Activated naive CD4-positive, alpha-beta T cell treated with anti-CD3 and anti-CD28 coated beads for 36 hours (primary cell): ENCODE measurements at regions of chr14 and their contacts with region 1.

Region 1: DNA sequence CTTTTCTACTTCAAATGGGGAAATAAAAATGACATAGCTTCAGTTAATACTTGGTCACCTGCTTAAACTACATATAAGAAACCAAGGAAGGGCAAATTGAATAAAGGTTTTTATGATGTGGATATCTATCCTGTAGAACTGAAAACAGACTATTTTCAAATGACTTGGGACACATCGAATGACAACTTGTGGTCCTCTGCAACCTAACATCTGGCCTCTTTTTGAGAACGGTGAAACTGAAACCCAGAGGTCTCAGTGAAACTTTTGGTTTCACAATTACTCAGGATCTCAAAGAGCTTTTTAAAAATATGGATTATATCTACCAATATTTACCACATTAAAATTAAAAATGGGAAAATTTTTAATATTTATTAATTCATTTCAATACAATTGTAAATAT is 65.2 kb downstream of the PPP2R5E start:
- DNase-seq: peak; percentile 42
- H3K4me3 Mint-ChIP-seq: no peak overlapping the region
- H3K27ac Mint-ChIP-seq: no peak overlapping the region
- H3K4me1 Mint-ChIP-seq: peaks cover 49% of the 10 kb centered on the region
- H3K27me3 Mint-ChIP-seq: no peaks in the 10 kb centered on the region

Region 2: DNA sequence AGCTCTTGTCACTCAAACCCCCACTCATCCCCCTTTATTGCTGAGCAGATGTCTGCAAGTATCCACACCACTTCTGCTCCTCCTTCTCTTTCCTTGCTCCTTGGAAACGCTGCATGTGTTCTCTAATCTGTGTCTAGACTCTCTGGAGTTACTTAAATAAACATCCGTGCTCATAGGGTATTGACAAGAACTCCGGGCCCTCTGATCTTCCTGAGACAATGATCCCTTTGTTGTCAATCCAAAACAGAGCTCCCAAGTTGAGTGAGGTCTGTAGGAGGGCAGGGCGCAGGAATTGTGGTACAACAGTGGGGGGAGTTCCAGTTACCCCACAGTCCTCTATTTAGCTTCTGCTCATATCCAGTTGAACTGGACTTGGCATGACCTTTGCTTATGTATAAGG is 1226.8 kb before region 1 on chr14:
- CTCF ChIA-PET with region 1: no interaction called
- intact Hi-C with region 1: no loop called
- DNase-seq: no peak
- H3K4me3 Mint-ChIP-seq: no peak overlapping the region
- H3K27ac Mint-ChIP-seq: no peak overlapping the region
- H3K4me1 Mint-ChIP-seq: no peaks in the 10 kb centered on the region
- H3K27me3 Mint-ChIP-seq: peaks cover 2% of the 10 kb centered on the region

Region 3: DNA sequence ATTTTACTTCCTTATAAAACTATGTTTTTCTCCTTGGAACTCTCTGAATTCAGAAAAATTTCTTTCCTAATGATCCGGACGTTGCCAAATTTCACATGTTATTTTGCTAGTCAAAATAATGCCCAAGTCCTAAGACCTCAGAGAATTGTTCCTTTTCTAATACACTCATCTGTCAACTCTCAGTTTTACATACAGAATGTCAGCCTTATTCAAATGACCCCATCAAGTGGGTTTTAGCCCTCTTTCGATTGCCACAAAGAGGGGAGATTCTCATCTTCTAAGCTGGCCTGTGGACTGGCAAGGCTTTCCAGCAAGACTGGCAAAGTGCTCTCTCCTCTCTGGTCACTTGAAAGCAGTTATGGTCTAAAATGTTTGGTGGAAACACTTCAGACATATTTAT is 60.0 kb before region 1 on chr14:
- CTCF ChIA-PET with region 1: no interaction called
- intact Hi-C with region 1: no loop called
- DNase-seq: no peak
- H3K4me3 Mint-ChIP-seq: no peak overlapping the region
- H3K27ac Mint-ChIP-seq: no peak overlapping the region
- H3K4me1 Mint-ChIP-seq: no peaks in the 10 kb centered on the region
- H3K27me3 Mint-ChIP-seq: no peaks in the 10 kb centered on the region

Region 4: DNA sequence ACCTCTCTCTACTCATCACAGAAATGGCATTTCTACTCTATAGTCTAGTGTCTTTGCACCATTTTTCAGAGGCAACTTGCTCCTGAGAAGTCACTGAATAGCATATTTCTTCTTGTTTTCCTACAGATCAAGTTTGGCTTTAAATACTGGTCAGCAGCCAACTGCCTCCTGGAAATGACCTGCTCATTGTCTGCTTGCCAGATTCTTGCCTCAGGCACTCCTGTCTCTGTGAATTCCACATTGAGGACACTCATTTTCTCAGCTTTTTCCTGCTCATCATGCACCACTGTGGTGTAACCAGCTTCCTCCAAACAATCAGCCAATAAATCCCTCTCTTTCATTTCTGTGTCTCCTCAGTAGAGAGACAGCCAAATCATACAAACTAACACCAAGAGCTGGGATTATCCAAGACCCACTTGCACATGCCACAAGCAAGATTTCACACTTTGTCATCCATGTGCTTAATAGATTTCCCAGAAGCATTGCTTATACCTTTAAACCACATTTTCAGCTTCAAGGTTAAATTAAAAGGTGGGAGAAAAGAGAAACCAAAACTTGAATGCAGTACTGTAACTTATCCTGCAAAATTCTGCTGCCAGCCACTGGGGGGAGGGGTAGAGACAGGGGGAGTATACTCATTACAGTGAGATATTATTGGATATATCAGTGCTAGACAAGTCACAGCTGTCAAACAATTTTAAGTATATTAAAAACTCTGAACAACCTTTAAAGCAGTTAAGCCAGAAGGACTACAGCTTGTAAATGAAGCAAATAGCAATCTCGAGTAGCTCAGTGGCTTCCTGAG is 39.9 kb before region 1 on chr14:
- CTCF ChIA-PET with region 1: interaction called, 3 read pairs
- intact Hi-C with region 1: loop called (anchors 2 kb)
- DNase-seq: peak; percentile 47
- H3K4me3 Mint-ChIP-seq: no peak overlapping the region
- H3K27ac Mint-ChIP-seq: no peak overlapping the region
- H3K4me1 Mint-ChIP-seq: peaks cover 55% of the 10 kb centered on the region
- H3K27me3 Mint-ChIP-seq: no peaks in the 10 kb centered on the region

Region 5: GRCh38 chr14:63510538-63510937 is 32.5 kb after region 1 on chr14:
- CTCF ChIA-PET with region 1: no interaction called
- intact Hi-C with region 1: loop called (anchors 2 kb)
- DNase-seq: peak; percentile 14
- H3K4me3 Mint-ChIP-seq: no peak overlapping the region
- H3K27ac Mint-ChIP-seq: peak overlapping the region; percentile 20
- H3K4me1 Mint-ChIP-seq: peaks cover 56% of the 10 kb centered on the region
- H3K27me3 Mint-ChIP-seq: no peaks in the 10 kb centered on the region

Region 6: DNA sequence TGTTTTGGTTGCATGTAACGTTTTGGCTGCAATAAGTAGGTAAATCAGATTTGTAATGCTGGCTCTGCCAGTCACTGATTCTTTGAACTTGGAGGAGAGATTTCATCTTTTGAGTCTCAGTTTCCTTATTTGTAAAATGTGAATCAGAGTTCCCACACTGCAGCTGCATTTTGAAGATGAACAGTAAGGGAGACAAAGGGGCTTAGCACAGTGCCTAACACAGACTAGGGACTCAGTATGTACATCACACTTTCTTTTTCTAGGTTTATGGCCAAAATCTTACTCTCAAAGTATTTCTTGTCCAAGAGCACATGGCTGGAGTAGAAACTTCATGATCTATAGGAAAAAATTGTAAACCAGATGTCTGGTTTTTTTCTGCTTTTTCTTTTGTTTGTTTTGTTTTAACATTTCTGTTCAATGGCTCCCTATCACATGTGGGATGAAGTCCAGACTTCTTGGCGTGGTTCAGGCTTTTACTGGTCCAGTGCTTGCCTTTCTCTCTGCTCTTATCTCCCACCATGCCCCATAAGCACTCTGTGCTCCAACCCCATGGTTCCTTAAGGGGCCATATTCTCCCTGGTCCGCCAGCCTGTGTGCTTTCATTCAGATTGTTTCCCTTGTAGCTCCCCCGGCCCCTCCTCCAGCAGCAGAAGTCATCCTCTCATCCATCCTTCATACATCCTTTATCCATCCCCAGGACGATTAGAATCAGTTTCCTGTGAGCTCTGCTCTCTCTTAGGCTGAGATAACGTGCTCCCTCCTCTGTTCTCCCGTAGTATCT is 432.8 kb after region 1 on chr14:
- CTCF ChIA-PET with region 1: no interaction called
- intact Hi-C with region 1: loop called (anchors 5 kb)
- DNase-seq: peak; percentile 54
- H3K4me3 Mint-ChIP-seq: peak overlapping the region; percentile 0
- H3K27ac Mint-ChIP-seq: peak overlapping the region; percentile 37
- H3K4me1 Mint-ChIP-seq: peaks cover 46% of the 10 kb centered on the region
- H3K27me3 Mint-ChIP-seq: no peaks in the 10 kb centered on the region